Activated CD8-positive, alpha-beta memory T cell treated with anti-CD3 and anti-CD28 coated beads, Interleukin-2, amount 10 ng/mL, durations not matched to agents 7 days and 5 days (primary cell): ENCODE measurements at regions of chr18 and their contacts with region 1.

Region 1: DNA sequence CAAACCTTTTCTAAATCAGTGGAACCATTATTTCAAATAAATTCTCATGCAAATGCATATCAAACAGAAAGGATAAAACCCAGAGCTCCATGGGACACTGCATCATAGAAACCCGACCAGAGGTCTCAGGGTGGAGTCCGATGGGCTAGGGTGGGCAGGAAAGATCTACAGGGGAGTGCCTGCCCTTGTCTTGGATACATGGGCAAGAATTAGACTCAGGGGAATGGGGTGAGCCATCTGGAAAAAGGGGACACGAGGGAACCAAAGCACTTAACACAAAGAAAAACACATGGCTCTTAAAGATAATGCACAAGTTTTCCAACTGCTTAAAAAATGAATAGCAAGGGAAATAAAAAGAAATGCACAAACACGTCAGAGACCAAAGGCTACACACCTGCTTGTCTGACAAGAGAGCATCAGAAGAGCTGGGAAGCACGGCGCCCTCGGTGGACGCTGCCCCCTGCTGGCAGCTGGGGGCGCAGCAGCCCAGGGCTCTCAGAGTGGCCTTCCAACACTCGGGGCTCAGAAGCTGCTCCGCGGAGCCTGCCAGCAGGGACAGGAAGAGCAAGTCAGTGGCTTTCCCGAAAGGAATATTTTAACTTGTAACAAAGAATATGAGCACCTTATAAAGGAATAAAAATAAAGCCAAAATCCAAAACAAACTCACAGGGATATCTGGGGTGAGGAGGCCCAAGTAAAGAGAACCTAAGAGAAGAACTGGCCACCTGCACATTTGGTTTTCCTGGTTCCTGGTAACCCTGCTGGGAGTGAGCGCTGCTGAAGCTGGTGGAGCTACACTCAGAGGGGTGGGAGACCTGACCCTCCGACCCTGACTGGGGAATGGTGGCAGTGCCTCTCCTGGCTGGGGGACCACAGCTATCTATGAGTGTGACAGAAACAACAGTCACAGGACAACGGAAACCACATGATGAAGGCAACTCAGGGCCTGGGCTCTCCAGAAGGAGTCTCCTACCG is 54.5 kb downstream of the SIGLEC15 start:
- DNase-seq: peak; percentile 71
- ATAC-seq: peak; percentile 91
- H3K4me3 Mint-ChIP-seq: no peak overlapping the region
- H3K27ac Mint-ChIP-seq: no peak overlapping the region
- H3K4me1 Mint-ChIP-seq: peaks cover 10% of the 10 kb centered on the region
- H3K27me3 Mint-ChIP-seq: no peaks in the 10 kb centered on the region

Region 2: DNA sequence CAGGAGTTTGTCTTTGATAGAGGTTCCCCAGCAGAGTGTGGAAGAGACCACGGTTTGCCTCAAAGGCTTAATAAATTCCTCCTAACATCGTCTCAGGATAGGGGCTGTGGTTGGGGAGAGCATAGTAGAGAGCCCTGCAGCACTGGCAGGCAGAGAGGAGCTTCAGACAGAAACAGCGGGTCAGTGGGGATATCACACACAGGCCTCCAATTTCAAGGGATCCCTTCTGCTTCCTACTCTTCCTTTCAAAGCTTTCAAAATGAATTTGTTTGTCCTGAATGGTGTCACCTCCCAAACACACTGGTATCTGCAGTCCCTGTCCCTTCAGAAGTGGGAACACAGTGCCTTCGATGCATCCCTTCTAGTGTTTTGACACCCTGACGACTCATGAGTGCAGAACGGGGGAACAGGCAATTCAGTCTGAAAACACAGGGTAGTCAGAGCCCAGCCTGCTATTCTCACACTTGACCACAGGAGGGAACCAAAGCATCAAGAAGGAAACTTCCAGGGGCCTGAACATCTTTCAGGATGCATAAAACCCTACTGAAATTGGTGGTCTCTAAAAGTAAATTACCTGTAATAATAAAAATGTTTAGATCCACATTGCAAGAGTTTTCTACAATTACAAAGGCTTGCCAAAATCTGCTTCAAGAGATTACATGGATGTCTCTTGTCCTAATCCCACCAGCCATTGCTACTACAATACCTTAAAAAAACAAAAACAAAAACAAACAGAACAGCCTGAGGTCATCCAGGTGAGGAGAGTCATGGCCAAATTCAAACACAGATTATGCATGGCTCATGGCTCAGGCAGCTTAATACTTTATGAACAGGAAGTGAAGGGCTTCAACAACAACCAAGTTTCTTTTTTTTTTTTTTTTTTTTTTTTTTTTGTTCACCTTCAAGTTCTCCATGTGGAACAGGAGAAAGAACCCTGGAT is 214.9 kb before region 1 on chr18:
- CTCF ChIA-PET with region 1: interaction called, 130 read pairs
- DNase-seq: peak; percentile 82
- ATAC-seq: peak; percentile 53
- H3K4me3 Mint-ChIP-seq: no peak overlapping the region
- H3K27ac Mint-ChIP-seq: peak overlapping the region; percentile 95
- H3K4me1 Mint-ChIP-seq: peaks cover 56% of the 10 kb centered on the region
- H3K27me3 Mint-ChIP-seq: no peaks in the 10 kb centered on the region

Region 3: GRCh38 chr18:45722899-45723298 is 157.1 kb before region 1 on chr18:
- CTCF ChIA-PET with region 1: interaction called, 50 read pairs
- DNase-seq: peak; percentile 80
- ATAC-seq: peak; percentile 87
- H3K4me3 Mint-ChIP-seq: no peak overlapping the region
- H3K27ac Mint-ChIP-seq: no peak overlapping the region
- H3K4me1 Mint-ChIP-seq: peaks cover 5% of the 10 kb centered on the region
- H3K27me3 Mint-ChIP-seq: peaks cover 2% of the 10 kb centered on the region

Region 4: DNA sequence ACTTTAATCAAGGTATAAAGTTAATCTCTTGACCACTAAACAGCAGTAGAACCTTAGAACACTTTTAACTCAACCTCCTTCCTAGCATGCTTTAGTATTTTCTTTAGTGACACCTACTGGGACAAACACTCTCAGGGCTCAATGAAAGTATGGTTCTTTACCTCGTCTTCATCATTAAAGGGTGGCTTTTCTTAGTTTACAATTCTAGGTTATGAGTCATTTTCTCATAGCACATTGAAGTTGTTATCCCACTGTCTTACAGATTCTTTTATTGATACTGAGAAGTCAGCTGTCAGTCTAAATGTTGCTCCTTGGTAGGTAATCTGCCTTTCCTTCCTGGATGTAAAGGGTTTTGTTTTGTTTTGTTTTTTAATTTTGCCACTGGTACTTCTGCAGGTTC is 16.5 kb before region 1 on chr18:
- CTCF ChIA-PET with region 1: interaction called, 10 read pairs
- DNase-seq: no peak
- ATAC-seq: no peak
- H3K4me3 Mint-ChIP-seq: no peak overlapping the region
- H3K27ac Mint-ChIP-seq: no peak overlapping the region
- H3K4me1 Mint-ChIP-seq: peaks cover 2% of the 10 kb centered on the region
- H3K27me3 Mint-ChIP-seq: no peaks in the 10 kb centered on the region

Region 5: GRCh38 chr18:45910405-45911023 is 30.5 kb after region 1 on chr18:
- CTCF ChIA-PET with region 1: interaction called, 10 read pairs
- DNase-seq: peak; percentile 75
- ATAC-seq: peak; percentile 84
- H3K4me3 Mint-ChIP-seq: no peak overlapping the region
- H3K27ac Mint-ChIP-seq: no peak overlapping the region
- H3K4me1 Mint-ChIP-seq: no peaks in the 10 kb centered on the region
- H3K27me3 Mint-ChIP-seq: no peaks in the 10 kb centered on the region

Region 6: GRCh38 chr18:45954070-45954934 is 74.3 kb after region 1 on chr18:
- CTCF ChIA-PET with region 1: no interaction called
- DNase-seq: no peak
- ATAC-seq: no peak
- H3K4me3 Mint-ChIP-seq: no peak overlapping the region
- H3K27ac Mint-ChIP-seq: no peak overlapping the region
- H3K4me1 Mint-ChIP-seq: peaks cover 9% of the 10 kb centered on the region
- H3K27me3 Mint-ChIP-seq: no peaks in the 10 kb centered on the region